B cell (primary cell): ENCODE measurements at regions of chr6 and their contacts with region 1.

Region 1: DNA sequence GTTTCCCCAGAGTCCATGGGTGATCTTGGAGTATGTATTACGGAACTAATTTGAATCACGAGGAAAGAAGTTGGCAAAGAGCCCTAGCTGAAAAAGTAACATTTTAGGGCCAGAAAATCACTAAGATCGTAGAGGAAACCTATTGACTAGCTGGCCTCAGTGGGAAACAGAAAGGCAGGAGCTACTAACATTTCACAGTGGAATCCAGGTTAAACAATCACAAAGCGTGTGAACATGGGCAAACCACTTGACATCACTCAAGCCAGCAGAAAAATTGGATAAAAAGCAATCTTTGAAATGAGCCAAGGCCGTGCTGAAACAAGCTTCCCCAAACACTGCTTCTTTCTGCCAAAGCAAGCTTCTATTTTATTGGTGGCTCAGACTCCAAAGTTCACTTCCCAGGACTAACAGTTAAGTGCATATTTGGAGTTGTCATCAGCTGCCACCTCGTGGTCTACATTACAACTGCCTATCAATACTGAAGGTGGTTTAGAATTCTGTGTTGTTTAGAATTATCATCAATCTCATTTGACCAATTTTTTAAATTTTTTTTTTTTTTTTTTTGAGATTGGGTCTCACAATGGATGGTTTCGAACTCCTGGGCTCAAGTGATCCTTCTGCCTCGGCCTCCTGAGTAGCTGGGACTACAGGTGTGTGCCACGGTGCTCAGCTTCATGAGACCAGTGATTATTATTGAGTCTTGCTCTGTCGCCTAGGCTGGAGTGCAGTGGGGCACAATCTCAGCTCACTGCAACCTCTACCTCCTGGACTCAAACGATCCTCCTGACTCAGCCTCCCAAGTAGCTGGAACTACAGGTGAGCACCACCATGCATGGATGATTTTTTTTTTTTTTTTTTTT is 10.6 kb downstream of the RPS10 start:
- DNase-seq: peak; percentile 78
- ATAC-seq: peak; percentile 85
- H3K4me3 ChIP-seq: no peak overlapping the region
- H3K4me3 Mint-ChIP-seq: no peak overlapping the region
- H3K27ac ChIP-seq: no peak overlapping the region
- H3K27ac Mint-ChIP-seq: no peak overlapping the region
- H3K4me1 ChIP-seq: peaks cover 0 to 4% of the 10 kb centered on the region in 2 donors
- H3K4me1 Mint-ChIP-seq: peaks cover 4% of the 10 kb centered on the region
- H3K27me3 ChIP-seq: no peaks in the 10 kb centered on the region
- H3K27me3 Mint-ChIP-seq: no peaks in the 10 kb centered on the region
- CTCF ChIP-seq: peak; percentile 73

Region 2: DNA sequence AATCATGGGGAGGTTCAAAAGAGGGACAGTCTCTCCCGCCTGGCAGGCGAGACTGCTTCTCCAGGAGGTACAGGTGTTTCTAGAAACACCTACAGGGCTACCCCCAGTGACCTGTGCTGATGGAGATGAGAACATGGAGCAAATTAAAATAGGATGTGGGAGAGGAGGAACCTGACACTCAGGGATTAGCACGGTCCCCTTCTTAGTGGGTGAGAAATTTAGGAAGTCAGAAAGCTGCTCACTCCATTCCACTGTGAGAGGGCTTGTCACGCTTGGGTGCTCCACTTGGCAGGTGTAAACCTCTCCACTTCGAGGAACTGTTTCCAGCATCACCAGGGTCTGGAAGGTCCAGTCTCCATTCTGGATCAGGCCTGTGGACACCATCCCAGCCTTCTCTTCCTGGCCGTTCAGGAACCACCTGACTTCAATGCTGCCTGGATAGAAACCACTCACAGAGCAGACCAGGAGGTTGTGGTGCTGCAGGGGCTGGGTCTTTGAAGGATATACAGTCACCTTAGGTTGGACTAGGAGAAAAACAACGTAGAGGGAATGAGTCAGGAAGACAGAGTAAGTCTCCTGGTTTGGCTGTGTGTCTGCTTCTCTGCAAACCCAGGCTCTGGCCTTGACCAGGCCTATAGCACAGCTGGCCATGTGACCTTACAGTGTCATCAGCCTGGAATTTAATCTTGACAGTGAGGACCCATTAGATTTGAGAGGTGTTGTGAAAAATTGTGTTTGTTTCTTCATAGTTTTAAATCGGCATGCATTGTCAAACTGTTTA is 1833.7 kb before region 1 on chr6:
- CTCF ChIA-PET with region 1: no interaction called
- POLR2A ChIA-PET with region 1: no interaction called
- intact Hi-C with region 1: no loop called
- DNase-seq: no peak
- ATAC-seq: no peak
- H3K4me3 ChIP-seq: no peak overlapping the region
- H3K4me3 Mint-ChIP-seq: peak overlapping the region; percentile 34
- H3K27ac ChIP-seq: peak overlapping the region; percentile 2 to 62
- H3K27ac Mint-ChIP-seq: peak overlapping the region; percentile 85
- H3K4me1 ChIP-seq: peaks cover 0 to 11% of the 10 kb centered on the region in 2 donors
- H3K4me1 Mint-ChIP-seq: peaks cover 50% of the 10 kb centered on the region
- H3K27me3 ChIP-seq: no peaks in the 10 kb centered on the region
- H3K27me3 Mint-ChIP-seq: no peaks in the 10 kb centered on the region
- CTCF ChIP-seq: no peak

Region 3: GRCh38 chr6:34161857-34162515 is 253.2 kb before region 1 on chr6:
- CTCF ChIA-PET with region 1: interaction called, 81 read pairs
- POLR2A ChIA-PET with region 1: interaction called, 4 read pairs
- intact Hi-C with region 1: loop called (anchors 1 kb)
- DNase-seq: no peak
- ATAC-seq: no peak
- H3K4me3 ChIP-seq: no peak overlapping the region
- H3K4me3 Mint-ChIP-seq: no peak overlapping the region
- H3K27ac ChIP-seq: no peak overlapping the region
- H3K27ac Mint-ChIP-seq: no peak overlapping the region
- H3K4me1 ChIP-seq: no peaks in the 10 kb centered on the region
- H3K4me1 Mint-ChIP-seq: no peaks in the 10 kb centered on the region
- H3K27me3 ChIP-seq: no peaks in the 10 kb centered on the region
- H3K27me3 Mint-ChIP-seq: peaks cover 15% of the 10 kb centered on the region
- CTCF ChIP-seq: no peak

Region 4: GRCh38 chr6:34196126-34196830 is 219.0 kb before region 1 on chr6:
- CTCF ChIA-PET with region 1: interaction called, 121 read pairs
- POLR2A ChIA-PET with region 1: interaction called, 7 read pairs
- intact Hi-C with region 1: loop called (anchors 1 kb)
- DNase-seq: peak; percentile 92
- ATAC-seq: peak; percentile 98
- H3K4me3 ChIP-seq: peak overlapping the region; percentile 21 to 83 (median 70)
- H3K4me3 Mint-ChIP-seq: peak overlapping the region; percentile 86
- H3K27ac ChIP-seq: peak overlapping the region in 1 of 2 donors; percentile 52
- H3K27ac Mint-ChIP-seq: peak overlapping the region; percentile 77
- H3K4me1 ChIP-seq: peaks cover 7 to 12% of the 10 kb centered on the region in 2 donors
- H3K4me1 Mint-ChIP-seq: peaks cover 12% of the 10 kb centered on the region
- H3K27me3 ChIP-seq: no peaks in the 10 kb centered on the region
- H3K27me3 Mint-ChIP-seq: no peaks in the 10 kb centered on the region
- CTCF ChIP-seq: peak; percentile 94

Region 5: DNA sequence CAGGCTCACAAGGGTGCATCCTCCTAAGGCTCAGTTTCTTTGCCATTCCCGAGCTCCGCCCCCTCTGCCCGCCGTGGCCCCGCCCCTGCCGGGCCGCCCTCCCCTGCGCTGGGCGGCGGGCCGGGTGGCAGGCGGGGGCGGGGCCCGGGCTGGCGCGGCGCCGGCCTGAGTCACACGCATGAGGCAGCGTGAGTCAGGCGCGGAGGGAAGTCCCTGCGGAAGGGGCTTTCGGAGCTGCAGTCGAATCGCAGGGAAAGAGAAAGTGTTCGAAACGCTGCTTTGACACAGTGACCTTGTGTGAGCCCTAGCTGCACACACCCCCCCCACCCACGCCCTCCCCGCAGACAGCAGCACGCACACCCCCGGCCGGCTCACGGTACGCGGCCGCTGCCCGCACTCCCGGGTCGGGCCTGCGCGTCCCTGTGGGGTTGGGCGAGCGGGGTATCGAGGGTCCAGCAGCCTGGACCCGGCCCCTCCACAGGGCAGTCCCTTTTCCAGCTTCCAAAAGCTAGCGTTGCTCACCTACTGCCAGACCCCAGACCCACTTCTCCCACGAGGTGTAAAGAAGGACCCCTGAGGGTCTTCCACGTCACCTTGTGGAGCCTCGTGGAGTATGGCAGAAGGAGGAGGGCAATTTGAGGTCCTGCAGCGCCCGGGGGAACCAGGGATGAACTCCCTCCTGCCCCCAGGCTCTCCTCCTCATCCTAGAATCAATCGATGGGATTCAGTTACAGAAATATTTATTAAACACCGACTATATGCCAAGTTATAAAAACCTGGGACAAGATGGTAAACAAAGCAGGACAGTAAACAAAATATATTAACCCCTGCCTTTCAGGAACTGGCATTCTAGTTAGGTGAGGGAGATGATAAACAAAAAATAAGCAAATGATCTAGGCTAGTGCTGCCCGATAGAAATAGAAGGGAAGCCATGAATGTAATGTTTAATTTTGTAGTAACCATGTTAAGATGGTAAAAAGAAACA is 191.0 kb before region 1 on chr6:
- CTCF ChIA-PET with region 1: interaction called, 11 read pairs
- POLR2A ChIA-PET with region 1: interaction called, 6 read pairs
- intact Hi-C with region 1: no loop called
- DNase-seq: peak; percentile 98
- ATAC-seq: peak; percentile 96
- H3K4me3 ChIP-seq: peak overlapping the region in 4 of 5 experiments; percentile 59 to 76 (median 74)
- H3K4me3 Mint-ChIP-seq: peak overlapping the region; percentile 57
- H3K27ac ChIP-seq: peak overlapping the region; percentile 96 to 99
- H3K27ac Mint-ChIP-seq: peak overlapping the region; percentile 91
- H3K4me1 ChIP-seq: peaks cover 33 to 42% of the 10 kb centered on the region in 2 donors
- H3K4me1 Mint-ChIP-seq: peaks cover 49% of the 10 kb centered on the region
- H3K27me3 ChIP-seq: no peaks in the 10 kb centered on the region
- H3K27me3 Mint-ChIP-seq: no peaks in the 10 kb centered on the region
- CTCF ChIP-seq: no peak

Region 6: DNA sequence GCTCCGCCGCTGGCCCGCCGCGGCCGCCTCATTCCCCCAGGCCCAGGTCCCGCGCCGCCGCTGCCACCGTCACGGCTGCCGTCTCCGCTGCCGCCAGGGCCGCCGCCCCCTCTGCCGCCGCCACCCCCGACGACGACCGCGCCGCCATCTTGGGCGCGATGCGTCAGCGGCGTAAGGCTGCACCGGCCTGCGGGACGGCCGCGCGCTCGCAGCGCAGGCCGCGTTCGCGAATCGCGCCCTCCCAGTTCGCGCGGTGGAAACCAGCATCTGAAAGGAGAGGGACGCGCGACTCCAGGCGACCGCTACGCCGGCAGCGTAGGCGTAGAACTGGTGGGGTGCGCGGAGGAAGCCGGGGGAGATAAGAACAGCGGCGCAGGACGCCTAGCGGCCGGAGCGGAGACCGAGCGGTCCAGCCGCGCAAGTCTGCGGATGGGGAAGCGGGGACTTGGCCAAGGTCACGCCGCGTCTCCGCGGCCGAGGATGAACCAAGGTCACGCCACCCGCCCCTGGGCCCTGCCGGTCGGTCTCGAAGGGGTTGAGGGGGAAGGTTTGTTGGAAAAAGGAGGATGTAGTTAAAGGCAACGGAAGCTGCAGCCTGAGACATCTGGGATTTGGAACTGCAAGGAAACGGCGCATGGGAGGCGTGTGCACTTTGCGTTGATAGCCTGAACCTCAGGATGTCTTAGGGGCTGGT is 22.6 kb before region 1 on chr6 and contains the start of gene NUDT3:
- CTCF ChIA-PET with region 1: interaction called, 68 read pairs
- POLR2A ChIA-PET with region 1: no interaction called
- intact Hi-C with region 1: loop called (anchors 2 kb)
- DNase-seq: peak; percentile 99
- ATAC-seq: peak; percentile 87
- H3K4me3 ChIP-seq: peak within 1 kb of the TSS; percentile 71 to 97 (median 87)
- H3K4me3 Mint-ChIP-seq: no peak within 1 kb of the TSS
- H3K27ac ChIP-seq: peak within 1 kb of the TSS; percentile 71 to 88
- H3K27ac Mint-ChIP-seq: peak within 1 kb of the TSS; percentile 87
- H3K4me1 ChIP-seq: peaks cover 16 to 31% of the 10 kb centered on the region in 2 donors
- H3K4me1 Mint-ChIP-seq: peaks cover 25% of the 10 kb centered on the region
- H3K27me3 ChIP-seq: no peaks in the 10 kb centered on the region
- H3K27me3 Mint-ChIP-seq: no peaks in the 10 kb centered on the region
- CTCF ChIP-seq: peak; percentile 79
- total RNA-seq, gene NUDT3: 37.4 and 40.1 TPM in 2 replicates

Region 7: DNA sequence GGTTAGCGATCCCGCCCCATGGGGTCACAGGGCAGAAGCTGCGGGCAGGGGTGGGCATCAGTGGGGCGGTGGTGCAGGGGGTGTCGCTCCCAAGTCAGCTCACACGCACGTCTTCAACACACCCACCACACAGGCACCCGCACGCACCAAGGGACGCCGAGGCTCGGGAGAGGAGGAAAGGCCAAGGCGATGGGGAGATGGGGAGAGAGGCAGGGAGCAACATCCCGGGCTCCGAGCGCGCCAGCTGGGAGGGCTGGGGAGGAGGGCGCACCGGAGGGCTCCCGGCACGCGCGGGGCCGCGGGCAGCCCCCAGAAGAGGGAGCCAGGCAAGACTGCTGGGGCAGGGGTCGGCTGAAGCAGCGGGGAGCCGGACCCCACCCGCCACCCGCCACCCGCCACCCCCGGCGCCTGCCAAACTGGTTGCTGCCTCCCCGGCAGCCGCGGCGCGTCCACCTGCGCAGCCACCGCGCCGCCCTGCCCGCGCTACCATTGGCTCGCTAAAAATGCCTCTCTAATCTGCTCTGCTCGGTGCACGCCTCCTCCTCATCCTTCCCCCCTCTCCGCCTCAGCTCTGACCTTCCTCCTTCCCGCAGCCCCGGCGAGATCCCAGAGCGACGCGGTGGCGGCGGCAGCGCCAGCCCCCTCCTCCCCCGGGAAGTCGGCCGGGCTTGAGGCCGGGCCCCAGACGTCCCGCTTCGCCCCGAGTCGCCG is 50.5 kb after region 1 on chr6 and contains the start of gene PACSIN1:
- CTCF ChIA-PET with region 1: no interaction called
- POLR2A ChIA-PET with region 1: no interaction called
- intact Hi-C with region 1: no loop called
- DNase-seq: peak; percentile 42
- ATAC-seq: peak; percentile 46
- H3K4me3 ChIP-seq: peak within 1 kb of the TSS in 4 of 5 experiments; percentile 17 to 53 (median 46)
- H3K4me3 Mint-ChIP-seq: peak within 1 kb of the TSS; percentile 78
- H3K27ac ChIP-seq: no peak within 1 kb of the TSS
- H3K27ac Mint-ChIP-seq: peak within 1 kb of the TSS; percentile 50
- H3K4me1 ChIP-seq: peaks cover 28 to 36% of the 10 kb centered on the region in 2 donors
- H3K4me1 Mint-ChIP-seq: peaks cover 38% of the 10 kb centered on the region
- H3K27me3 ChIP-seq: peaks cover 0 to 28% (median 7%) of the 10 kb centered on the region in 4 experiments
- H3K27me3 Mint-ChIP-seq: peaks cover 17% of the 10 kb centered on the region
- CTCF ChIP-seq: no peak
- total RNA-seq, gene PACSIN1: 0.20 TPM in 1 of 2 replicates, not detected in the other

Region 8: DNA sequence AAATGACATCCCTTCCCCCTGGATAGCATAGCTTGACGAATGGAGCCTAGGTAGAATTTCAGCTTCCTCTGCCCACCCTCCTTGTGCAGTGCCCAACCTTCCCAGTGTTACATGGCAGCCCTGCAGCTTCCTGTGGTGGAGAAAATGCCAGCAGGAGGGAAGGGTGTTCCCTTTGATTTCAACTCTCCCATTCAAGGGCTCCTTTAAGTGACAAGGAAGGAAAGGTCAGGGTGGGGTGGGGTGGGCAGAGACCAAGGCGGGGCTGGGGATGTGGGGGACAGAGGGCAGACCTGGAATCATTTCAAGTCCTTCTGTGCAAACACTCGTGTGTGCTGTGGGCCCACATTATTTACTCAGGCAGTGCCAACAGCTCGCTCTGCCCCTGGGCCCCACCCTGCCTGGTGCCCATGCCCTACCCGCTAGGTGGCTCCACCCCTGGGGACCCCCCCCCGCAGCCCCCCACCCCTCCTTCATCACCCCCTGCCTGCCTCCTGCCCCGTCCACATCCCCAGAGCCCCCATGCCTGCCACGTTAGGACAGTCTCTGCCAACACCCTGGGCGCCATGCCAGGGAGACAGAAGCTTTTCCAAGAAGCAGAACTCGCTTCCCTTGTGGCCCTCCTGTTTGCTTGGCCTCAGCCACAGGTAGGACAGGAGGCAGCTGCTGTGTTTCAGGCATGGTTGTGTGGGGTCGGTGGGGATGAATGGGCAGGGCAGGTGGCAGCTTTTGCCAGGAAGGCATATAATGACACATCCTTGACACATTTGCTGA is 131.5 kb after region 1 on chr6:
- CTCF ChIA-PET with region 1: no interaction called
- POLR2A ChIA-PET with region 1: no interaction called
- intact Hi-C with region 1: no loop called
- DNase-seq: no peak
- ATAC-seq: no peak
- H3K4me3 ChIP-seq: no peak overlapping the region
- H3K4me3 Mint-ChIP-seq: no peak overlapping the region
- H3K27ac ChIP-seq: no peak overlapping the region
- H3K27ac Mint-ChIP-seq: no peak overlapping the region
- H3K4me1 ChIP-seq: no peaks in the 10 kb centered on the region
- H3K4me1 Mint-ChIP-seq: no peaks in the 10 kb centered on the region
- H3K27me3 ChIP-seq: no peaks in the 10 kb centered on the region
- H3K27me3 Mint-ChIP-seq: no peaks in the 10 kb centered on the region
- CTCF ChIP-seq: no peak

Region 9: GRCh38 chr6:34610819-34611477 is 195.7 kb after region 1 on chr6:
- CTCF ChIA-PET with region 1: interaction called, 35 read pairs
- POLR2A ChIA-PET with region 1: no interaction called
- intact Hi-C with region 1: loop called (anchors 2 kb)
- DNase-seq: no peak
- ATAC-seq: no peak
- H3K4me3 ChIP-seq: no peak overlapping the region
- H3K4me3 Mint-ChIP-seq: no peak overlapping the region
- H3K27ac ChIP-seq: peak overlapping the region in 1 of 2 donors; percentile 30
- H3K27ac Mint-ChIP-seq: no peak overlapping the region
- H3K4me1 ChIP-seq: no peaks in the 10 kb centered on the region
- H3K4me1 Mint-ChIP-seq: peaks cover 8% of the 10 kb centered on the region
- H3K27me3 ChIP-seq: no peaks in the 10 kb centered on the region
- H3K27me3 Mint-ChIP-seq: no peaks in the 10 kb centered on the region
- CTCF ChIP-seq: no peak